ENCODE measurements at regions of chr9 and their contacts with region 1.

Region 1: DNA sequence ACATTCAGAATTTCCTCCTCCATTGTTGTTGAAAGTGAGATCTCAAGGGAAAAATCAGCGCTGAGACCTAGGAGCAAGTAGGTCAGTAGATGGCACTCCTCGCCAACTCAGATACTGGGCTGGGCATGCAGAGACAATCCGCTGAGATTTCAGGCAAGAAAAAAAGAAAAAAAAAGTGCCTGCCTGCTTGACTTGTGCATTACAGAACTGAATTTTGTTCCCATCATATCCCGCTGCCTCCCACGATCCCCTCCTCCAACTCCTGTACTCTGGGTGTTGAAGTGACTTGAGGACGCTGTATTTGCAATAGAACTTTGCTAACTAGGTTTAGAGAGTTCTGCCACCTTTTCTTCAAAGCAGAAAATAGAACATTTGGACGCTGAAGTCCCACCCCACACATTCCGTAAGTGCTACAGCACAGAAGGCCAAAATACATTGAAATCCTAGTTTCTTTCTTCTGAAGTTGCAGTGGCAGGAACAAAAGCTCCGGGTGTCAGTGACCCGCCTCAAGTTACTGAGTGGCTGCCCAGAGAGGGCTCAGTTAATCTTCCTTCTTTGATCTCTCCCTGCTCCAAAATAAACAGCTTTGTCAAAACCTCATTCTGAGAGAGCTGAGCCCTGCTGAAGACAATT is 265.8 kb downstream of the MLLT3 start:
- DNase-seq: peak; percentile 66
- ATAC-seq: peak; percentile 89

Region 2: GRCh38 chr9:20152151-20152725 is 204.3 kb before region 1 on chr9:
- intact Hi-C with region 1: no loop called
- DNase-seq: no peak
- ATAC-seq: no peak

Region 3: GRCh38 chr9:20331095-20331685 is 25.3 kb before region 1 on chr9:
- intact Hi-C with region 1: no loop called
- DNase-seq: no peak
- ATAC-seq: no peak

Region 4: GRCh38 chr9:20382460-20383071 is 26.0 kb after region 1 on chr9:
- intact Hi-C with region 1: no loop called
- DNase-seq: no peak
- ATAC-seq: no peak

Region 5: GRCh38 chr9:20426019-20426418 is 69.5 kb after region 1 on chr9:
- intact Hi-C with region 1: no loop called
- DNase-seq: no peak
- ATAC-seq: no peak

Region 6: GRCh38 chr9:20941174-20941690 is 584.7 kb after region 1 on chr9:
- intact Hi-C with region 1: loop called (anchors 10 kb)
- DNase-seq: peak; percentile 61
- ATAC-seq: peak; percentile 93

Measured in sciatic nerve (tissue), 2 donors.